Aorta (tissue), 5 donors: ENCODE measurements at regions of chr4 and their contacts with region 1.

Region 1: GRCh38 chr4:94451695-94452475 is at the start of gene PDLIM5:
- DNase-seq: peak; percentile 93 to 96
- ATAC-seq: peak; percentile 96
- H3K4me3 ChIP-seq: peak within 1 kb of the TSS; percentile 65 to 88
- H3K27ac ChIP-seq: peak within 1 kb of the TSS; percentile 86 to 95
- H3K4me1 ChIP-seq: peaks cover 0 to 2% of the 10 kb centered on the region in 2 donors
- H3K27me3 ChIP-seq: no peaks in the 10 kb centered on the region
- total RNA-seq, gene PDLIM5: 374 to 762 TPM

Region 2: DNA sequence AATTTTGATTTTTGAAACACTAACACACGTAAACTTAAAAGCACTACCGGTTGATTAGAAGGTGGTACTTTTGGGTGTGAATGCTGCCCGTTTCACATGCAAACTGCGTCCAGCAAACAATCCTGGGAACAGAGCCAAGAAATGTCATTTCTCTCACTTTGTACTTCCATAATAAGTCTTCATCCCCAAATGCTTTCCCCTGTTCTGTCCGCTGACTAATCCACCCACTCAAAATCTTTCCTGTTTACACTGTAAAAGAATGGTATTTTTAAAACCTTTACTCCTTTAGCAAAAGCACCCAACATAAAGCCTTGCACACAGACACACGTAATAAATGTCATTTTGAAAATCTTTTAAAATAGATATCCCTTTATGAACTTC is 39.2 kb before region 1 on chr4:
- intact Hi-C with region 1: loop called (anchors 2 kb)
- DNase-seq: no peak
- ATAC-seq: no peak
- H3K4me3 ChIP-seq: peak overlapping the region in 1 of 2 donors; percentile 59
- H3K27ac ChIP-seq: peak overlapping the region; percentile 57 to 71
- H3K4me1 ChIP-seq: peaks cover 6 to 7% of the 10 kb centered on the region in 2 donors
- H3K27me3 ChIP-seq: no peaks in the 10 kb centered on the region

Region 3: GRCh38 chr4:94497690-94498089 is 45.8 kb after region 1 on chr4:
- intact Hi-C with region 1: loop called in 1 of 2 experiments (anchors 5 kb)
- DNase-seq: no peak
- ATAC-seq: no peak
- H3K4me3 ChIP-seq: no peak overlapping the region
- H3K27ac ChIP-seq: peak overlapping the region in 1 of 2 donors; percentile 28
- H3K4me1 ChIP-seq: peaks cover 3 to 4% of the 10 kb centered on the region in 2 donors
- H3K27me3 ChIP-seq: no peaks in the 10 kb centered on the region

Region 4: GRCh38 chr4:94583914-94584641 is 132.2 kb after region 1 on chr4:
- intact Hi-C with region 1: loop called in 1 of 2 experiments (anchors 5 kb)
- DNase-seq: no peak
- ATAC-seq: no peak
- H3K4me3 ChIP-seq: no peak overlapping the region
- H3K27ac ChIP-seq: no peak overlapping the region
- H3K4me1 ChIP-seq: no peaks in the 10 kb centered on the region
- H3K27me3 ChIP-seq: no peaks in the 10 kb centered on the region

Region 5: DNA sequence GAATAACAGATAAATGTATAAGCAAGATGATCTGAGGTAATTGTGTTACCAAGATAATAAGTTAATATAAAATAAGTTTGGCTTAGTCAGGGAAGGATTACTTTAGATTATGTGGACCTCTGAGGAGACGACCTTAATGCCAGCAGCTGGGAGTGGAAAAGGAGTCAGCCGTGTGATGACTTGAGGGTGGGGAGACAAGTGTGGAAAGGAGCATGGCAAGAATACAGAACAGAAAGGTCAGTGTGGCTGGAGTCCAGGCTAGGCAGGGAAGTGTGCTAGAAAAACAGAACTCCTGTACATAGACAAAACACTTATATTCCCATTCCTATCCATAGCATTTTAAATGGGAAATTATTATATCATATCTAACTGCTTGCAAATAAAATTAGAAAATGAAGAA is 138.6 kb after region 1 on chr4:
- intact Hi-C with region 1: loop called in 1 of 2 experiments (anchors 5 kb)
- DNase-seq: no peak
- ATAC-seq: no peak
- H3K4me3 ChIP-seq: no peak overlapping the region
- H3K27ac ChIP-seq: no peak overlapping the region
- H3K4me1 ChIP-seq: peaks cover 0 to 5% of the 10 kb centered on the region in 2 donors
- H3K27me3 ChIP-seq: no peaks in the 10 kb centered on the region

Region 6: GRCh38 chr4:94711635-94712034 is 259.8 kb after region 1 on chr4:
- intact Hi-C with region 1: no loop called
- DNase-seq: no peak
- ATAC-seq: no peak
- H3K4me3 ChIP-seq: no peak overlapping the region
- H3K27ac ChIP-seq: no peak overlapping the region
- H3K4me1 ChIP-seq: no peaks in the 10 kb centered on the region
- H3K27me3 ChIP-seq: no peaks in the 10 kb centered on the region